Activated naive CD4-positive, alpha-beta T cell treated with anti-CD3 and anti-CD28 coated beads for 36 hours (primary cell): ENCODE measurements at regions of chr5 and their contacts with region 1.

Region 1: DNA sequence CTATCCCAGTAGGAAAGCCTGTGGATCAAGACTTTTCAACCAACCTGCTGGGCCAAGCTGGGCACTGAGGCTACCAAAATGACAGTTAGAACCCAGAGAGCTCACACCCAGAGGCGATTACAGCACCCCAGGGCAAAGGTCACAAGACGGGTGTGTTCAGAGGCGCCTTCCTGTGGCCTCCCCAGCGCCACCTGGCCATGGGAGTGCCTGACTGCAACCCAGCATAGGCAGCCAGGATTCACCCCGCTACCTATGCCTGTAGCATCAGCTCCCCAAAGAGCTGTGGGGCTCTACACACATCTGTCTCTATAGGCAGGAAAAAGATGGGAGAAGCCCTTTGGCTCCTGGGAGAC is 33.5 kb downstream of the PDGFRB start:
- DNase-seq: peak; percentile 60
- H3K4me3 Mint-ChIP-seq: no peak overlapping the region
- H3K27ac Mint-ChIP-seq: no peak overlapping the region
- H3K4me1 Mint-ChIP-seq: no peaks in the 10 kb centered on the region
- H3K27me3 Mint-ChIP-seq: no peaks in the 10 kb centered on the region

Region 2: GRCh38 chr5:149834246-149834855 is 287.8 kb before region 1 on chr5:
- CTCF ChIA-PET with region 1: interaction called, 3 read pairs
- intact Hi-C with region 1: loop called (anchors 5 kb)
- DNase-seq: peak; percentile 79
- H3K4me3 Mint-ChIP-seq: no peak overlapping the region
- H3K27ac Mint-ChIP-seq: no peak overlapping the region
- H3K4me1 Mint-ChIP-seq: peaks cover 5% of the 10 kb centered on the region
- H3K27me3 Mint-ChIP-seq: no peaks in the 10 kb centered on the region

Region 3: DNA sequence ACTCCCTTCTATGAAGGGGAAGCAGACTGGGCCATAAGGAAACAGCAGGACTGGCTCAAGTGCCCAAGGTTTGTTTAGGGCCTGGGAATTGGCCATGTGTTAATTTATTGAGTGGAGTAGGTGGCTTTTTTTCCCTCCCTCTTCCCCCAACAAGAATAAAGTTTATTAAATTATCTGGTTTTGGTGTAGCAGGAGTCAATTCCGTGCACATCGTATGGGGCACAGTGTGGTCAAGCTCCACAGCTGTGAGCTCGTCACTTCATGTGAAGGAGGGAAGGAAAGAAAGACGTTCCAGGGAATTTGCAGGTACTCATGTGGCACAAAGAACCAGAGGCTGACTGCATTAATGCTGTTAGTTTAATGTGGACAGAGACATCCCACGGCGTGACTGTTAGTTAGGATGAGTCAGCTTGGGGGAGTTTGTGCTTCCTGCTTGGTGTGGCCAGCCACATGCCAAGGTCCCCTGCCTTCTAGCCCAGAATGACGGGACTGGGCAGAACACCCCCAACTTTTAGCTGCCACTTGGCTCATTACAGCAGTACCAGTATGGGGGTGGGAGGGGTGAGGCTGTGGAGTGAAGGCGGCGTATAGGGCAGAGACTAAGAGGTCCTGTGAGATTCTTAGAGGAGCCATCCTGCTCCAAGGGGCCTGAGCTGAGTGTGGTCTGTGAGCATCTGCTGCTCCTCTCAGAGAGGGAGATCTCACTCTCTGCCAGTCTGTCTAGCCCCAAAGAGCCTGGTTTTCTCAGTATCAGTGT is 69.0 kb before region 1 on chr5:
- CTCF ChIA-PET with region 1: no interaction called
- intact Hi-C with region 1: loop called (anchors 2 kb)
- DNase-seq: no peak
- H3K4me3 Mint-ChIP-seq: no peak overlapping the region
- H3K27ac Mint-ChIP-seq: no peak overlapping the region
- H3K4me1 Mint-ChIP-seq: no peaks in the 10 kb centered on the region
- H3K27me3 Mint-ChIP-seq: no peaks in the 10 kb centered on the region

Region 4: DNA sequence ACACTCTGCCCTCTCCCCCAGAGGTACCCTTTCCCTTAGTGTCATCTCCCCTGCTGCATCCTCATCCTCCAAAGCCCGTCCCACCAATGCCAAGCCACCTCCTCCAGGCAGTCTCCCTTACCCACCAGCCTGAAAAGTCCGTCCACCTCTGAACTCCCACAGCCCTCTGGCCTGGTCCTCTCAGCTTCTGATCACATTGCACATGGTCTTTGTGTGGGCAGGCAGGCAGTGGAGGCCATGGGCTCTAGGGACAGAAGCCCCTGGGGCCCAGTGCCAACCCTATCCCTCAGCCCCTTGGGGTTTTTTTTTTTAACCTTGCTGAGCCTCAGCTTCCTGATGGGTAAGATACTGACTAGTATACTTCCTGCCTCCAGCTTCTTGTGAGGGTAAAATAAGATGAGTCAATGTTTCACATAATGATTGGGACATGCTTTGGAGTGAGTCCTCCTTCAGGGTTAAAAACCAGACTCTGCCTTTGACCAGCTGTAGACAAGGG is 55.2 kb before region 1 on chr5:
- CTCF ChIA-PET with region 1: no interaction called
- intact Hi-C with region 1: loop called (anchors 5 kb)
- DNase-seq: no peak
- H3K4me3 Mint-ChIP-seq: no peak overlapping the region
- H3K27ac Mint-ChIP-seq: peak overlapping the region; percentile 44
- H3K4me1 Mint-ChIP-seq: peaks cover 12% of the 10 kb centered on the region
- H3K27me3 Mint-ChIP-seq: no peaks in the 10 kb centered on the region